ENCODE measurements at regions of chr4 and their contacts with region 1.

Region 1: DNA sequence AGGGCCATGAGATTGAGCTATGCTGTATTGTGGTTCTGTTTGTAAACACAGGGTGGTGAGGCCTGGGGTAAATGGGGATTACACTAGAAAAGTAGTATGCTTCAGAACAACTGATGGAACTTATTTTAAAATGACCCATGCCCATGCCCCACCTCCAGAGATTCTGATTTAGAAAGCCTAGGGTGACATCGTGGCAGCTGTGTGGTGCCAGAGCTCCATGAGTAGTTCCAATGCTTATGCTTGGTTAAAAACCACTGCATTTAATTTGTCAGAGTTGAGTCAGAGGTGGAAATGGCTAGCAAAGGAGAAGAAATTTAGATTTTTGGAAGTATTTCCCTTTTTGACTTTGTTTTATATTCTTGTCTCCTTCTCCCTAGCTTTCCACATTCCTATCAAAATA is 63.4 kb upstream of the PDE5A start:
- DNase-seq: peak in 3 of 5 donors; percentile 22 to 28 (median 26)
- ATAC-seq: peak; percentile 70 to 81 (median 73)
- H3K4me3 ChIP-seq: peak overlapping the region in 7 of 12 donors; percentile 9 to 46 (median 38)
- H3K27ac ChIP-seq: peak overlapping the region in 5 of 12 donors; percentile 9 to 64 (median 59)
- H3K4me1 ChIP-seq: peaks cover 0 to 7% (median 0%) of the 10 kb centered on the region in 12 donors
- H3K27me3 ChIP-seq: no peaks in the 10 kb centered on the region
- CTCF ChIP-seq: peak in 9 of 12 donors; percentile 18 to 59 (median 43)
- POLR2A ChIP-seq: no peak

Region 2: DNA sequence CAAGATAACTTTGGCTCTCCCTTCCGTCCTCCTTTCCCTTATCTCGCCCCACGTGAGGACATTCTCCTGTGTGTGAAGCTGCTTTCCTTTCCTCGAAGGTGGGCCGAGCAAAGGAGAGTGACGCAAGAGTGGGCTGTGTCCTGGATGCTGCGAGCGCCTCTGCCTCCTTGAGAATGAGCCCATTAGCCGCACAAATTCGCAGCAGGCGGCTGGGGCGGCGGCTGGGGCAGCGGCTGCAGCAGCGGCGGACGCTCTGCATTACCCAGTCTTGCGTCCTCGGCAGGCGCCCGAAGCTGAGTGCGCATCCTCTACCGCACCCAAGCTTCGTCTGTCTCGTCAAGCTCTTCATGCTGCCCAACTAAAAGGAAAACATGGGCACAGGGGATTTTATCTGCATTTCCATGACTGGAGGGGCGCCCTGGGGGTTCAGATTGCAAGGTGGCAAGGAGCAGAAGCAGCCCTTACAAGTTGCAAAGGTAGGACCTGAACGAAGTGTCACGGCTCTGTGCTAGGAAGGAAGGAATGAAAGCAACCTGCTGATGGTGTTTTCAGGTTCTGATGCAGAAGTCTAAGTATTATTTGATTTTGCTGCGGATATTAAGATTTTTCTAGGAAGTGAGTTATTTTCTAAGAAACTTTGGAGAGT is 803.2 kb before region 1 on chr4 and contains the start of gene SYNPO2:
- intact Hi-C with region 1: no loop called
- DNase-seq: peak; percentile 82 to 90 (median 88)
- ATAC-seq: peak; percentile 81 to 94 (median 86)
- H3K4me3 ChIP-seq: peak within 1 kb of the TSS; percentile 21 to 82 (median 72)
- H3K27ac ChIP-seq: peak within 1 kb of the TSS; percentile 70 to 93 (median 88)
- H3K4me1 ChIP-seq: peaks cover 0 to 13% (median 7%) of the 10 kb centered on the region in 12 donors
- H3K27me3 ChIP-seq: peaks cover 0 to 14% (median 0%) of the 10 kb centered on the region in 9 donors
- CTCF ChIP-seq: peak in 1 of 12 donors; percentile 5
- POLR2A ChIP-seq: peak in 1 of 2 donors; percentile 82
- total RNA-seq, gene SYNPO2: 151 to 290 (median 247) TPM

Region 3: DNA sequence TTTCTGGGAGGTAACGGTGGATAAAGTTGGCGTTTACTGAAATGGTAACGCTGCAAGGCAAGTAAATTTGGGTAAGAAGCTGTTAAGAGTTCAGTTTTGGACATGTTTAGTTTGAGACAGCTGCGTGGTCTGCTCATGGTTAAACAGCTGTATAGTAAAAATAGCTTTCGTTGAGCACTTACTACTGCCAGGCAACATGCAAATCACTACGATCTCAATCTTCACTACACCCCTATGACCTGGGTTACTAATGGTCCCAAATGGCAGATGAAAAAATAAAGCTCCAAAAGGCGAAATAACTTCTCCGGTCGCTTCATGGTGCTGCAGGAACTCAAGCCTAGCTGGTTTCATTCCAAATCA is 392.3 kb before region 1 on chr4:
- intact Hi-C with region 1: no loop called
- DNase-seq: no peak
- ATAC-seq: peak; percentile 4 to 33 (median 17)
- H3K4me3 ChIP-seq: peak overlapping the region; percentile 63 to 93 (median 78)
- H3K27ac ChIP-seq: peak overlapping the region; percentile 81 to 98 (median 93)
- H3K4me1 ChIP-seq: peaks cover 6 to 44% (median 25%) of the 10 kb centered on the region in 12 donors
- H3K27me3 ChIP-seq: no peaks in the 10 kb centered on the region
- CTCF ChIP-seq: no peak
- POLR2A ChIP-seq: no peak

Region 4: GRCh38 chr4:119774840-119775239 is 82.8 kb after region 1 on chr4:
- intact Hi-C with region 1: loop called in 4 of 10 experiments (anchors 5 to 10 kb)
- DNase-seq: no peak
- ATAC-seq: no peak
- H3K4me3 ChIP-seq: no peak overlapping the region
- H3K27ac ChIP-seq: no peak overlapping the region
- H3K4me1 ChIP-seq: no peaks in the 10 kb centered on the region
- H3K27me3 ChIP-seq: no peaks in the 10 kb centered on the region
- CTCF ChIP-seq: no peak
- POLR2A ChIP-seq: no peak

Measured in heart left ventricle (tissue), 16 donors.